ENCODE measurements at regions of chr4 and their contacts with region 1.

Region 1: GRCh38 chr4:147707865-147708672 is 23.8 kb upstream of the ARHGAP10 start:
- DNase-seq: no peak
- ATAC-seq: peak; percentile 82
- H3K4me3 ChIP-seq: no peak overlapping the region
- H3K27ac ChIP-seq: no peak overlapping the region
- H3K4me1 ChIP-seq: peaks cover 3% of the 10 kb centered on the region
- H3K27me3 ChIP-seq: no peaks in the 10 kb centered on the region
- CTCF ChIP-seq: peak; percentile 76 to 92 (median 87)
- EP300 ChIP-seq: no peak
- POLR2A ChIP-seq: no peak
- RAD21 ChIP-seq: peak; percentile 95

Region 2: GRCh38 chr4:147539959-147540358 is 168.1 kb before region 1 on chr4:
- CTCF ChIA-PET with region 1: no interaction called
- POLR2A ChIA-PET with region 1: no interaction called
- RAD21 ChIA-PET with region 1: no interaction called
- SMC1A ChIA-PET with region 1: no interaction called
- in situ Hi-C with region 1: no loop called
- intact Hi-C with region 1: no loop called
- DNase-seq: no peak
- ATAC-seq: no peak; the same call in 2 of the 3 replicates
- H3K4me3 ChIP-seq: no peak overlapping the region
- H3K27ac ChIP-seq: no peak overlapping the region
- H3K4me1 ChIP-seq: no peaks in the 10 kb centered on the region
- H3K27me3 ChIP-seq: no peaks in the 10 kb centered on the region
- CTCF ChIP-seq: no peak
- EP300 ChIP-seq: no peak
- POLR2A ChIP-seq: no peak
- RAD21 ChIP-seq: no peak

Region 3: GRCh38 chr4:147570616-147571015 is 137.5 kb before region 1 on chr4:
- CTCF ChIA-PET with region 1: no interaction called
- POLR2A ChIA-PET with region 1: no interaction called
- RAD21 ChIA-PET with region 1: no interaction called
- SMC1A ChIA-PET with region 1: no interaction called
- in situ Hi-C with region 1: no loop called
- intact Hi-C with region 1: no loop called
- DNase-seq: no peak
- ATAC-seq: no peak
- H3K4me3 ChIP-seq: no peak overlapping the region
- H3K27ac ChIP-seq: no peak overlapping the region
- H3K4me1 ChIP-seq: no peaks in the 10 kb centered on the region
- H3K27me3 ChIP-seq: no peaks in the 10 kb centered on the region
- CTCF ChIP-seq: no peak
- EP300 ChIP-seq: no peak
- POLR2A ChIP-seq: no peak
- RAD21 ChIP-seq: no peak

Region 4: DNA sequence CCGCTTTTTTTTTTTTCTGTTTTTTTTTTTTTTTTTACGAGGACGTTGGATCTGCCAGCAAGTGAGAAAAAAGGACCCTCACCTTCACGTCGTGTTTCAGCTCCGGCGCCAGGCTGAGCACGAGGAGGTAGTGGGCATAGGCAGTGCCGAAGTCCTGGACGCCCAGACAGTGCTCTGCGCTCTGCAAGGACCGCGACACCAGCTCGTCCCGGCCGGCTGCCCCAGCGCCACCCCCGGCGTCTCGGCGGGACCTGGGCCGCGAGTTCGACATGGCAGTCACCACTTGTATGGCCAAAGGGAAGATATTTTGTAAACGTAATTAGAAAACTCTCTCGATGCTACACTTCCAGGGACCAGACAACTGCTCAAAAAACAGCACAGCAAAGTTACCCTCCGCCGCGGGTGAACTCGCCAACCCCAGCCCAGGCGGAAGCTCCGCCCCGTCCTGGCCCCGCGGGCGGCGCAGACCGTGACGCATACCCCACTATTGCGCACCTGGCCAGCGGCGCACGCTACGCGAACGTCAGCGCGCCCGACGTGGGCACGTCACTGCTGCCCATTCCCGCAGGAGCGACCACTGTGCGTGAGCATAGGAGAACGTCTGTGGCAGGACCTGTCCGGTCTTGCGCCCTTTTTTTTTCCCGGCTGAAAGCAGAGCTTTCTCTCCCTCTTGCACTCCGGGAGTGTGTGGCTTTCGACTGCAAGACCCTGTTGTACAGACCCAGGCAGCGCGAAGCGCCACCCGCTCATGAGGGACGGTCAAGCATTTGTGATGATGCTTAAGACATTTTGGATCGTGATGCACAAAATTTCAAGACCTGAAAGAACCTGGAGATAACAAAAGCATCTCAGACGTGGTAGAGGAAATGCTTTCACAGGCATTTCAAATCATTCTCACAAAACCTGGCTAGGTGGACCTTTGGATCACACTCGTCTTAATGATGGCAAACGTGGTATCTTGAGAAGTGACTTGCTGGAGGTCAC is 24.1 kb before region 1 on chr4 and contains the start of gene PRMT9:
- CTCF ChIA-PET with region 1: interaction called, 9 read pairs
- POLR2A ChIA-PET with region 1: interaction called, 4 read pairs
- RAD21 ChIA-PET with region 1: interaction called, 6 read pairs
- SMC1A ChIA-PET with region 1: interaction called, 10 read pairs
- in situ Hi-C with region 1: no loop called
- intact Hi-C with region 1: no loop called
- DNase-seq: peak; percentile 74
- ATAC-seq: peak; percentile 97
- H3K4me3 ChIP-seq: peak within 1 kb of the TSS; percentile 90
- H3K27ac ChIP-seq: peak within 1 kb of the TSS; percentile 65
- H3K4me1 ChIP-seq: peaks cover 3% of the 10 kb centered on the region
- H3K27me3 ChIP-seq: no peaks in the 10 kb centered on the region
- CTCF ChIP-seq: no peak
- EP300 ChIP-seq: peak; percentile 70 to 79; a peak in 3 of 4 replicates
- POLR2A ChIP-seq: peak; percentile 95
- RAD21 ChIP-seq: no peak
- polyA plus RNA-seq, gene PRMT9: 4.1 to 4.3 TPM

Region 5: GRCh38 chr4:147723326-147723725 is 15.3 kb after region 1 on chr4:
- CTCF ChIA-PET with region 1: interaction called, 9 read pairs
- POLR2A ChIA-PET with region 1: no interaction called
- RAD21 ChIA-PET with region 1: interaction called, 6 read pairs
- SMC1A ChIA-PET with region 1: interaction called, 16 read pairs
- in situ Hi-C with region 1: no loop called
- intact Hi-C with region 1: no loop called
- DNase-seq: no peak
- ATAC-seq: no peak
- H3K4me3 ChIP-seq: no peak overlapping the region
- H3K27ac ChIP-seq: no peak overlapping the region
- H3K4me1 ChIP-seq: peaks cover 7% of the 10 kb centered on the region; the same call in 1 of the 2 replicates
- H3K27me3 ChIP-seq: no peaks in the 10 kb centered on the region
- CTCF ChIP-seq: no peak
- EP300 ChIP-seq: no peak
- POLR2A ChIP-seq: no peak
- RAD21 ChIP-seq: no peak

Region 6: GRCh38 chr4:147793569-147794313 is 85.7 kb after region 1 on chr4:
- CTCF ChIA-PET with region 1: interaction called, 5 read pairs
- POLR2A ChIA-PET with region 1: interaction called, 5 read pairs
- RAD21 ChIA-PET with region 1: interaction called, 19 read pairs
- SMC1A ChIA-PET with region 1: interaction called, 11 read pairs
- in situ Hi-C with region 1: no loop called
- intact Hi-C with region 1: no loop called
- DNase-seq: no peak
- ATAC-seq: peak; percentile 65
- H3K4me3 ChIP-seq: peak overlapping the region; percentile 4; the same call in 1 of the 2 replicates
- H3K27ac ChIP-seq: peak overlapping the region; percentile 72
- H3K4me1 ChIP-seq: peaks cover 37% of the 10 kb centered on the region
- H3K27me3 ChIP-seq: no peaks in the 10 kb centered on the region
- CTCF ChIP-seq: no peak
- EP300 ChIP-seq: no peak
- POLR2A ChIP-seq: no peak
- RAD21 ChIP-seq: no peak

Region 7: DNA sequence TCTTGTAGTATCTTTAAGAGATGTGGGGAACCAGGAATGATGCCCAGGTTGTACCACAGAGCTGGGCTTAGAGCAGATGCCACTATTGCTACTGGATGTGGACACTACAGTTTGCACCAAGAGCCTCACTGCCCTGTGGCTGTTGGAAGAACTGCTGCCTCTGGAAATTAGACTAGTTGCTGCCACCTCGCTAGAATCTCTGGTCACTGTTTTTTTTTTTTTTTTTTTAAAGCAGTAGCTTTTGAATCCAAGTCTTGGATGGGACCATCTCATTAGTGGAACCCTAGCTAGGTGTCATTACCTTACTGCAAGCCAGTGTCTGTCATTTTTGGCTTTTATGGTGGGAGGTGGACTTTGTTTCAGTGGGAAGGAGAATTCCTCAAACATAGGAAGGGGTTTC is 129.4 kb after region 1 on chr4:
- CTCF ChIA-PET with region 1: interaction called, 12 read pairs
- POLR2A ChIA-PET with region 1: interaction called, 3 read pairs
- RAD21 ChIA-PET with region 1: interaction called, 10 read pairs
- SMC1A ChIA-PET with region 1: interaction called, 17 read pairs
- in situ Hi-C with region 1: no loop called
- intact Hi-C with region 1: no loop called
- DNase-seq: no peak
- ATAC-seq: peak; percentile 86
- H3K4me3 ChIP-seq: peak overlapping the region; percentile 46; the same call in 1 of the 2 replicates
- H3K27ac ChIP-seq: peak overlapping the region; percentile 65
- H3K4me1 ChIP-seq: peaks cover 21% of the 10 kb centered on the region; the same call in 1 of the 2 replicates
- H3K27me3 ChIP-seq: no peaks in the 10 kb centered on the region
- CTCF ChIP-seq: peak; percentile 7 to 41 (median 34); a peak in 3 of 6 replicates
- EP300 ChIP-seq: no peak
- POLR2A ChIP-seq: no peak
- RAD21 ChIP-seq: 0 out of 2 replicates have a peak, but pooled peaks have one; percentile 3

Region 8: GRCh38 chr4:147853706-147854105 is 145.6 kb after region 1 on chr4:
- CTCF ChIA-PET with region 1: interaction called, 23 read pairs
- POLR2A ChIA-PET with region 1: interaction called, 4 read pairs
- RAD21 ChIA-PET with region 1: interaction called, 3 read pairs
- SMC1A ChIA-PET with region 1: interaction called, 11 read pairs
- in situ Hi-C with region 1: no loop called
- intact Hi-C with region 1: no loop called
- DNase-seq: no peak
- ATAC-seq: no peak
- H3K4me3 ChIP-seq: no peak overlapping the region
- H3K27ac ChIP-seq: no peak overlapping the region
- H3K4me1 ChIP-seq: no peaks in the 10 kb centered on the region
- H3K27me3 ChIP-seq: no peaks in the 10 kb centered on the region
- CTCF ChIP-seq: no peak
- EP300 ChIP-seq: no peak
- POLR2A ChIP-seq: no peak
- RAD21 ChIP-seq: no peak

Region 9: DNA sequence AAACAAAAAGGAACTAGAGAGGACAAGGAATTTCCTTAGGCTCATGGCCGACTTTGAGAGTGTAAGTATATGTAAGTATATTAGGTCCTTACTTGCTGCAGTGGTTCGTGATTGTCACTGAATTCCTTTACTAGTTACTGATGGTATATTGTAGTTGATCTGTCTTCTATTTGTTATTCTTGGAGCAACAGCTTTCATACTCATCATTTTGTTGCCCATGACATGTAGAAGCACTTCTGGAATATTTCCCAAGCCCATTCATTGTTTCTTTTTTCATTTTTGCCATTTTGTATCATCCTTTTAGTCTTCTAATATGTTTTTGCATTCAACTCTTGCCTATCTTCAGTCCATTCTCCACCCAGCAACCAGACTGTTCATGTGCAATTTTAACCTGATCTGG is 193.8 kb after region 1 on chr4:
- CTCF ChIA-PET with region 1: no interaction called
- POLR2A ChIA-PET with region 1: no interaction called
- RAD21 ChIA-PET with region 1: no interaction called
- SMC1A ChIA-PET with region 1: no interaction called
- in situ Hi-C with region 1: no loop called
- intact Hi-C with region 1: no loop called
- DNase-seq: no peak
- ATAC-seq: no peak
- H3K4me3 ChIP-seq: no peak overlapping the region
- H3K27ac ChIP-seq: no peak overlapping the region
- H3K4me1 ChIP-seq: no peaks in the 10 kb centered on the region
- H3K27me3 ChIP-seq: no peaks in the 10 kb centered on the region
- CTCF ChIP-seq: no peak
- EP300 ChIP-seq: no peak
- POLR2A ChIP-seq: no peak
- RAD21 ChIP-seq: no peak